ENCODE measurements at regions of chr5 and their contacts with region 1.

Region 1: DNA sequence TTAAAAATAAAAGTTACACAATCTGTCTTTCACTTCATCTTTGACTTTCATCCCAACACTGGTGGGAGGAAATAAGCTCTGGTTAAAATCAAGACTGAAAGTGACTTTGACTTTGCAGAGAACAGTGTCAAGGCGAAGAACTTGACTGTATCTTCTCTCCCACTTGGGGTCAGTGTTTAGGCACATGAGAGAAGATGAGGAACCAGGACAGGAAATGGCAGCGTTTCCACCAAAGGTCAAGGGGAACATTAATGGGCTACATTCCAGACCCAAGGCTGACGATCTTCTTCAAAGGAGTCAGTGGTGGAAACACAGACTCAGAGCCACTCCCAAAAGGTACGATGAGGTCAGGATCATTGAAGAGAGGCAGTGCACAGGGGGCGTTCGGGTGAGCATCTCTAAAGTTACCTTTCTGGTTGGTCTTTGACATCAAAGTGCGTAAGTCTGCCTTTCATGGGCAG is 409.6 kb downstream of the ARHGEF28 start:
- DNase-seq: no peak
- H3K4me3 ChIP-seq: no peak overlapping the region
- H3K27ac ChIP-seq: no peak overlapping the region
- H3K4me1 ChIP-seq: peaks cover 0 to 26% (median 14%) of the 10 kb centered on the region in 4 donors
- H3K27me3 ChIP-seq: no peaks in the 10 kb centered on the region
- CTCF ChIP-seq: peak in 2 of 4 experiments; percentile 23 to 29
- EP300 ChIP-seq: no peak
- POLR2A ChIP-seq: no peak

Region 2: GRCh38 chr5:74616236-74617146 is 580.9 kb after region 1 on chr5:
- intact Hi-C with region 1: no loop called
- DNase-seq: no peak
- H3K4me3 ChIP-seq: no peak overlapping the region
- H3K27ac ChIP-seq: no peak overlapping the region
- H3K4me1 ChIP-seq: no peaks in the 10 kb centered on the region
- H3K27me3 ChIP-seq: no peaks in the 10 kb centered on the region
- CTCF ChIP-seq: no peak
- EP300 ChIP-seq: no peak
- POLR2A ChIP-seq: no peak

Region 3: DNA sequence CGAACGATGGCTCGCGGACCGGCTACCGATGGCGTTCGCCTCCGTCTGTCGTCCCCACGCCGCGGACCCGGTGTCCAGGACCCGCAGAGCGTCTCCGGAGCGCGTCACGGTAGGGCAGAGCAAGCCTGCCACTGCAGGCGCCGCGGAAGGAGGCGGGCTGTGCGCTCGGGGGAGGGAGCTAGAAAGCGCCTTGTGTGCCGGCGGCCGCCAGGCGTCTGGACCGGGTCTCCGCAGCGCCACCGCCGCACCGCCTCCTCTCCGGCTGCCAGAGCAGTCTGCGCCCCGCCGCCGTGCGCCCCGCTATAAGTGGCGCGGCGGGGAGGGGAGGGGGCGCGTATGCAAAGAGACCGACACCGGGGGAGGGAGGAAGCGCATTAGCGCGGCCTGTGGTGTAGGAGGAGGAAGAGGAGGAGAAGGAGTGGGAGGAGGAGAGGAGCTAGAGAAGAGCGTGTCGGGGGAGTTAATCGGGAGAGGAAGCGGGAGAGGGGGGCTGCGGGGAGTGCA is 605.0 kb after region 1 on chr5 and contains the start of gene ENC1:
- intact Hi-C with region 1: loop called (anchors 2 kb)
- DNase-seq: peak; percentile 87
- H3K4me3 ChIP-seq: peak within 1 kb of the TSS; percentile 52 to 71 (median 58)
- H3K27ac ChIP-seq: peak within 1 kb of the TSS; percentile 67 to 83 (median 78)
- H3K4me1 ChIP-seq: peaks cover 0 to 36% (median 26%) of the 10 kb centered on the region in 4 donors
- H3K27me3 ChIP-seq: no peaks in the 10 kb centered on the region
- CTCF ChIP-seq: peak; percentile 28 to 58 (median 50)
- EP300 ChIP-seq: no peak
- POLR2A ChIP-seq: peak in 1 of 2 donors; percentile 59
- total RNA-seq, gene ENC1: 3.9 to 19.9 (median 8.3) TPM

Measured in sigmoid colon (tissue), 7 donors.